CD4-positive, alpha-beta memory T cell (primary cell): ENCODE measurements at regions of chr1 and their contacts with region 1.

Region 1: GRCh38 chr1:77281491-77282186 is at the start of gene AK5:
- DNase-seq: peak in 4 of 5 donors; percentile 36 to 39 (median 39)
- H3K4me3 ChIP-seq: peak within 1 kb of the TSS in 1 of 2 donors; percentile 54
- H3K4me3 Mint-ChIP-seq: peak within 1 kb of the TSS; percentile 78 to 91 (median 84)
- H3K27ac ChIP-seq: no peak within 1 kb of the TSS
- H3K27ac Mint-ChIP-seq: peak within 1 kb of the TSS in 2 of 7 donors; percentile 24 to 72
- H3K4me1 ChIP-seq: peaks cover 30% of the 10 kb centered on the region
- H3K4me1 Mint-ChIP-seq: peaks cover 21 to 33% (median 27%) of the 10 kb centered on the region in 4 donors
- H3K27me3 ChIP-seq: no peaks in the 10 kb centered on the region
- H3K27me3 Mint-ChIP-seq: peaks cover 9% of the 10 kb centered on the region in 2 donors
- total RNA-seq, gene AK5: 17.0 to 25.5 TPM

Region 2: GRCh38 chr1:77156214-77156613 is 125.4 kb before region 1 on chr1:
- CTCF ChIA-PET with region 1: no interaction called
- POLR2A ChIA-PET with region 1: no interaction called
- intact Hi-C with region 1: no loop called
- DNase-seq: no peak
- H3K4me3 ChIP-seq: no peak overlapping the region
- H3K4me3 Mint-ChIP-seq: no peak overlapping the region
- H3K27ac ChIP-seq: no peak overlapping the region
- H3K27ac Mint-ChIP-seq: peak overlapping the region in 1 of 7 donors; percentile 2
- H3K4me1 ChIP-seq: no peaks in the 10 kb centered on the region
- H3K4me1 Mint-ChIP-seq: peaks cover 1 to 8% (median 4%) of the 10 kb centered on the region in 4 donors
- H3K27me3 ChIP-seq: no peaks in the 10 kb centered on the region
- H3K27me3 Mint-ChIP-seq: no peaks in the 10 kb centered on the region

Region 3: DNA sequence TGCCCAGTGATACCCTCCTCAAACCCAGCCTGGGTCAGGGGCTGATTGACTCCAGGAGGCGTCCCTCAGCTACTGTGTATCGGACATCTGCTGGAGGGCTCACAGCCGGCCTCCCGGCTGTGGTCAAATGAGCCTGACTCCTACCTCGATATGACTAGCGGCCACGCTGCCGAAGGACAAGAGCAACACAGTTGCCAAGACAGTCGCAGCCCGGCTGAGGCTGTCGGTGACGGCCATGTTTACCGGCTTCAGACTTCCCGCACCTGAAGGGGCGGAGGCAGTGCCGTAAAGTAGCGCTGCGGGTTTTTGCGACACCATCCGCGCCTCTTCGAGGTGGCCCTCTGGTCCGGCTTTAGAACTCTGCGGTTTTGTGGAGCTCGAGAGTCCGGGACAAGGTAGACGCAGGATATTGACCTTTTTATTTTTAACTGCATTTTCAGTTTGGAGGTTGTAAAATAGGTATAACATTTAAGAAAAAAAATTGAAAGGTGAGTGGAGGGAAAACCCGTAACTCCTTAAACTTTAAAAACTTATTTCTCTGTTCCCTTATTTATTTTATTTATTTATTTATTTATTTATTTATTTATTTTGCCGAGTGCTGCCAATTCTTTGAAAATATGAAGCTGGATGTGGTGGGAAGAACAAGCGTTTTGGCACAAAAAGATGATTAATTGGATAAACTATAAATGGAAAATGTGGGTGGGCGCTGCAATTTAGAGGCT is 62.3 kb before region 1 on chr1 and contains the start of gene PIGK:
- CTCF ChIA-PET with region 1: no interaction called
- POLR2A ChIA-PET with region 1: no interaction called
- intact Hi-C with region 1: loop called (anchors 2 kb)
- DNase-seq: peak; percentile 84 to 87 (median 86)
- H3K4me3 ChIP-seq: peak within 1 kb of the TSS; percentile 90 to 99
- H3K4me3 Mint-ChIP-seq: peak within 1 kb of the TSS; percentile 93 to 99 (median 96)
- H3K27ac ChIP-seq: peak within 1 kb of the TSS; percentile 74
- H3K27ac Mint-ChIP-seq: peak within 1 kb of the TSS; percentile 93 to 97 (median 96)
- H3K4me1 ChIP-seq: peaks cover 33% of the 10 kb centered on the region
- H3K4me1 Mint-ChIP-seq: peaks cover 28 to 64% (median 50%) of the 10 kb centered on the region in 4 donors
- H3K27me3 ChIP-seq: no peaks in the 10 kb centered on the region
- H3K27me3 Mint-ChIP-seq: no peaks in the 10 kb centered on the region
- total RNA-seq, gene PIGK: 26.4 to 28.2 TPM

Region 4: DNA sequence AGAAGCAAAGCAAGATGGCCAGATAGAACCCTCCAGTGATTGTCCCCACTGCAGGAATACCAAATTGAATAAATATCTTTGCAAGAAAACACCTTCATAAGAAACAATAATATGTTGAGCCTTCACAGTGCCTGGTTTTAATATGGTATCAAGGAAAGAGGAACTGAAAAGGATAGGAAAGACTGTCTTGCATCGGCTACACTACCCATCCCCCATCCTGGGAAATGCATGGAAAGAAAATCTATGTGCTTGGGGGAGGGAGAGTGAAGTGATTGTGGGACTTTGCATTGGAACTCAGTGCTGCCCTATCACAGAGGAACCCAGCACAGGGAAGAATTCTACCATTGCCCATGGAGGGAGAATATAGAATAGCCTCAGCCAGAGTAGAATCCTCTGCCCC is 28.4 kb before region 1 on chr1:
- CTCF ChIA-PET with region 1: no interaction called
- POLR2A ChIA-PET with region 1: no interaction called
- intact Hi-C with region 1: no loop called
- DNase-seq: no peak
- H3K4me3 ChIP-seq: no peak overlapping the region
- H3K4me3 Mint-ChIP-seq: no peak overlapping the region
- H3K27ac ChIP-seq: no peak overlapping the region
- H3K27ac Mint-ChIP-seq: no peak overlapping the region
- H3K4me1 ChIP-seq: no peaks in the 10 kb centered on the region
- H3K4me1 Mint-ChIP-seq: peaks cover 0 to 3% (median 1%) of the 10 kb centered on the region in 4 donors
- H3K27me3 ChIP-seq: no peaks in the 10 kb centered on the region
- H3K27me3 Mint-ChIP-seq: no peaks in the 10 kb centered on the region

Region 5: DNA sequence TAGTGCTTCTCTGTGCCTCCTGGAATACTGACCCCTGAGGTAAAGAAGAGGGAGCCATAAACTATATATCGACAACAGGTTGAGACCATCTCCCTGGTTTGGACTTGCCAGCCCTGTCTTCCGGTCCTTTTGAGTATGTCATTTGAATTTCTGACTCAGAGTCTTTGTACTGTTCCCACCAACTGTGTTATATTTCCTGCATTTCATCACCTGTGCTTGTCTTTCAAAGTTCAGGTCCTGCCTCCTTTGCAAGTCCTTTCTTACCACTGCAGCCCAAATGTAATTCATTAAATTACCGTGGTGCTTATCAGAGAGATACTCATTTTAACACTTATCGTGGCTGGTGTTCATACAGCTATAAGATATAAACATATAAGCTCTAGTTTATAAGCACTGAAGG is 10.9 kb after region 1 on chr1:
- CTCF ChIA-PET with region 1: no interaction called
- POLR2A ChIA-PET with region 1: no interaction called
- intact Hi-C with region 1: loop called (anchors 2 kb)
- DNase-seq: no peak
- H3K4me3 ChIP-seq: no peak overlapping the region
- H3K4me3 Mint-ChIP-seq: no peak overlapping the region
- H3K27ac ChIP-seq: no peak overlapping the region
- H3K27ac Mint-ChIP-seq: peak overlapping the region in 1 of 7 donors; percentile 2
- H3K4me1 ChIP-seq: no peaks in the 10 kb centered on the region
- H3K4me1 Mint-ChIP-seq: peaks cover 0 to 3% (median 0%) of the 10 kb centered on the region in 4 donors
- H3K27me3 ChIP-seq: no peaks in the 10 kb centered on the region
- H3K27me3 Mint-ChIP-seq: no peaks in the 10 kb centered on the region

Region 6: DNA sequence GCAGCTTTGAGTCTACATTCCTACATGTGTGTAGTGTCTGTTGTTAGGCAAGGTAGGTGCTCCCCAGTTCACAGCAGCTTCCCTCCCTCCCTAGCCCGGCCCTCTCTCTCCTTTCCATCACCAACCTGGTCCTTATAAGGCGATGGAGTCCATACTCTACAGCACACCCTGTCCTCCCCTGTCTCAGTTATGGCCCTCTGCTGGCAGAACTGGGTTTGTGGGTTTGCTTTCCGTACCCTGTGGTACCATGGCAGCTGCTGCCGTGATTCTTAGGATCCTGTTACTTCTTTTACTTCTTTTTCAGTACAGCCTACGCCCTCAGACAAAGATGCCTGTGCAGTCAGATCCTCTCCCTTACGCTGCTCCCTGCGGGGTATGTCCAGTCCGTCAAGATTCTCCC is 31.9 kb after region 1 on chr1:
- CTCF ChIA-PET with region 1: interaction called, 10 read pairs
- POLR2A ChIA-PET with region 1: interaction called, 10 read pairs
- intact Hi-C with region 1: no loop called
- DNase-seq: peak; percentile 12 to 25 (median 24)
- H3K4me3 ChIP-seq: no peak overlapping the region
- H3K4me3 Mint-ChIP-seq: peak overlapping the region in 1 of 8 donors; percentile 26
- H3K27ac ChIP-seq: no peak overlapping the region
- H3K27ac Mint-ChIP-seq: peak overlapping the region in 1 of 7 donors; percentile 37
- H3K4me1 ChIP-seq: peaks cover 17% of the 10 kb centered on the region
- H3K4me1 Mint-ChIP-seq: peaks cover 18 to 34% (median 26%) of the 10 kb centered on the region in 4 donors
- H3K27me3 ChIP-seq: no peaks in the 10 kb centered on the region
- H3K27me3 Mint-ChIP-seq: peaks cover 1 to 3% of the 10 kb centered on the region in 2 donors

Region 7: DNA sequence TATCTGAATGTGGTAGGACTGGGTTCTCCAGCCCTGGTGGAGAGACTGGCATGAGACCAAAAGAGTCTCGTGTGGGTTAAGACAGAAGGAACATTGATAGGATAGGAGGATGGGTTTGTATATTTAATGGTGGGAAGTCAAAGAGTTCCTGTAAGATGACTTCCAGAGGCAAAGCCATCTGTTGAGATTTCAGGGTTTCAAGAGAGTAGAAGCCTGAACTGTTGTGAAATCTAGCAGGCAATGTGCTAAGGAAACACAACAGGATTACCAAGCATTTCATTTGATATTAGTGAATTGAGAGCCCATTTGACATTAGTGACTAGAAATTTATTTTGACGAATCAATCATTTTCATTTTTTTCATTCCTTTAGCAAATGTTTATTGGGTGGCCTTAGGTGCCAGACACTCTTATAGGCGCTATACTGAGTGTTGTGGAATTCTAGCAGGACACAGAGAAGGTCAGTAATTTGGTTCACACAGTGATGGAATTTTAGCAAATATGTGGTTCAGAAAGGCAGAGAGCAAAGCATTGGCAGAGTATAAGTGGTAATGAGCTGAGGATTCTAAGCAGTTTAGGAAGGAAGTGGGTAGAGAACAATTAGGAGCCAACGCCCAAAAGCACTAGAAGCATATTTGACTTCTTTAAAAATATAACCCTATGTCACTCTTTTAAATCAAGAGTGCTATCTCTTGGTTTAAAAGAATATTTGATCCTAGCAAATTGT is 149.5 kb after region 1 on chr1:
- CTCF ChIA-PET with region 1: no interaction called
- POLR2A ChIA-PET with region 1: interaction called, 5 read pairs
- intact Hi-C with region 1: loop called (anchors 5 kb)
- DNase-seq: peak in 4 of 5 donors; percentile 50 to 68 (median 64)
- H3K4me3 ChIP-seq: peak overlapping the region in 1 of 2 donors; percentile 21
- H3K4me3 Mint-ChIP-seq: no peak overlapping the region
- H3K27ac ChIP-seq: peak overlapping the region; percentile 44
- H3K27ac Mint-ChIP-seq: no peak overlapping the region
- H3K4me1 ChIP-seq: peaks cover 59% of the 10 kb centered on the region
- H3K4me1 Mint-ChIP-seq: peaks cover 17 to 19% (median 17%) of the 10 kb centered on the region in 4 donors
- H3K27me3 ChIP-seq: no peaks in the 10 kb centered on the region
- H3K27me3 Mint-ChIP-seq: no peaks in the 10 kb centered on the region

Region 8: GRCh38 chr1:77938651-77939050 is 657.0 kb after region 1 on chr1:
- CTCF ChIA-PET with region 1: no interaction called
- POLR2A ChIA-PET with region 1: no interaction called
- intact Hi-C with region 1: no loop called
- DNase-seq: no peak
- H3K4me3 ChIP-seq: no peak overlapping the region
- H3K4me3 Mint-ChIP-seq: no peak overlapping the region
- H3K27ac ChIP-seq: no peak overlapping the region
- H3K27ac Mint-ChIP-seq: peak overlapping the region in 1 of 7 donors; percentile 8
- H3K4me1 ChIP-seq: no peaks in the 10 kb centered on the region
- H3K4me1 Mint-ChIP-seq: peaks cover 0 to 8% (median 1%) of the 10 kb centered on the region in 4 donors
- H3K27me3 ChIP-seq: no peaks in the 10 kb centered on the region
- H3K27me3 Mint-ChIP-seq: no peaks in the 10 kb centered on the region